ENCODE measurements at regions of chr9 and their contacts with region 1.

Region 1: GRCh38 chr9:111525056-111525977 is at the start of gene ZNF483:
- DNase-seq: peak; percentile 78 to 94
- H3K4me3 ChIP-seq: peak within 1 kb of the TSS; percentile 71 to 87 (median 80)
- H3K27ac ChIP-seq: peak within 1 kb of the TSS; percentile 51
- H3K4me1 ChIP-seq: peaks cover 7 to 18% (median 11%) of the 10 kb centered on the region in 4 experiments; a peak in 6 of 7 replicates
- H3K27me3 ChIP-seq: no peaks in the 10 kb centered on the region
- CTCF ChIP-seq: no peak
- EP300 ChIP-seq: no peak
- POLR2A ChIP-seq: peak in 1 of 2 experiments; percentile 67; a peak in 2 of 3 replicates
- RAD21 ChIP-seq: no peak
- total RNA-seq, gene ZNF483: 82.0 and 83.8 TPM in 2 replicates

Region 2: DNA sequence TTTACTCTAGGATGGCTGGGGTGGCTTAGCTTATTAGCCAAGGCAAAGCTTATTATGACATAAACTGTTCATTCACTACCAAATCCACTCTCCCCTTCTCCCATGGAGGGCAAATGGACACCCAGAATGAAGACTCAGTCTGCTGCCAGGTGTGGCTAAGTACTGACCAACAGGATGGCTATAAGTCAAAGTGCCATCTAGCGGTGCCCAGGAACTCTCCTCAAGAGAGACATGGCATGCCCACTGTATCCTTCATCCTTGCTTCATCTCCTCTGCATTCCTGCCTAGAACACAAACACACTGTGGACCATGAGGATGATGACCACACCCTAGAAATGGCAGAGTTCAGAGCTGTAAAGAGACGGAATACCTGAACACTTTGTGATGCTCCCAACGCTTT is 155.4 kb before region 1 on chr9:
- CTCF ChIA-PET with region 1: no interaction called
- POLR2A ChIA-PET with region 1: no interaction called
- DNase-seq: no peak
- H3K4me3 ChIP-seq: no peak overlapping the region
- H3K27ac ChIP-seq: no peak overlapping the region
- H3K4me1 ChIP-seq: no peaks in the 10 kb centered on the region
- H3K27me3 ChIP-seq: no peaks in the 10 kb centered on the region
- CTCF ChIP-seq: no peak
- EP300 ChIP-seq: no peak
- POLR2A ChIP-seq: no peak
- RAD21 ChIP-seq: no peak

Region 3: DNA sequence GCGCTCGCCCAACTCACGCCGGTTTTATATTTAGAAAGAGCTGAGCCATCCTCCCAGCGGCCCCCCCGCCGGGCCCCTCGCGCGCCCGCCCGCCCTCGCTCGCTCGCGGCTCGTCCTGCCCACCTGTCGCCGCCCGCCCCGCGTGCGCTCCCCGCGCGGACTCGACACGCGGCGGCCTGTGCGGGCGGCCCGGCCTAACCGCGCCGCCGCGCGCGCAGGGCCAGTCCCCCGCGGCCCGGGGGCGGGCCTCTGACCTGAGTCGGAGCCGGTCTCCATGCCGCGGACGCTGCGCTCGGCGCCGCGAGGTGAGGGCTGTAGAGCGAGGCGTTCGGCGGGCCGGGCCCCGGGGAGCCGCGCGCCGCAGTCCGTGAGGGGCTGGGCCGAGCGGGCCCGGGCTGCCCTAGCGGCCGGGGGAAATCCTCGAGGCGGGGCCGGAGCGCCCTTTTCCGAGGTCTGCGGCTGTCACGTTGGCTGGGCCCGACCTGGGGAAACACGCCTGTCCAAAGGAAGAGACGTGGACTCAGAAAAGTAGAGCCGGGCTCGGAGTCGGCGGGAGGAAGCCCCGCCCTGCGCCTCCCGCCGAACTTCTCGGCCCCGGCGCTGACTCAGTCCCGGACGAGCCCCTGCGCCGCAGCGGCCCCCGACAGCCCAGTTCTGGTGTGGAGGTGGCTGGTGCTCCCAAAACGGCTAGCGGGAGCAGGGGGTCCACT is 41.3 kb before region 1 on chr9 and contains the start of gene ECPAS:
- CTCF ChIA-PET with region 1: no interaction called
- POLR2A ChIA-PET with region 1: interaction called, 64 read pairs
- DNase-seq: peak in 1 of 2 experiments; percentile 80
- H3K4me3 ChIP-seq: peak within 1 kb of the TSS; percentile 67 to 91 (median 80)
- H3K27ac ChIP-seq: peak within 1 kb of the TSS; percentile 82; the same call in 1 of the 2 replicates
- H3K4me1 ChIP-seq: peaks cover 0 to 4% (median 4%) of the 10 kb centered on the region in 4 experiments; a peak in 4 of 7 replicates
- H3K27me3 ChIP-seq: no peaks in the 10 kb centered on the region
- CTCF ChIP-seq: no peak
- EP300 ChIP-seq: no peak
- POLR2A ChIP-seq: peak in 1 of 2 experiments; percentile 23; a peak in 1 of 3 replicates
- RAD21 ChIP-seq: peak in 1 of 2 experiments; percentile 14; a peak in 2 of 4 replicates
- total RNA-seq, gene ECPAS: 123 and 131 TPM in 2 replicates

Region 4: GRCh38 chr9:111648066-111648465 is 122.7 kb after region 1 on chr9:
- CTCF ChIA-PET with region 1: no interaction called
- POLR2A ChIA-PET with region 1: no interaction called
- DNase-seq: no peak
- H3K4me3 ChIP-seq: no peak overlapping the region
- H3K27ac ChIP-seq: no peak overlapping the region
- H3K4me1 ChIP-seq: no peaks in the 10 kb centered on the region
- H3K27me3 ChIP-seq: no peaks in the 10 kb centered on the region
- CTCF ChIP-seq: no peak
- EP300 ChIP-seq: no peak
- POLR2A ChIP-seq: no peak
- RAD21 ChIP-seq: no peak

Measured in H1 (cell line).